ENCODE measurements at regions of chr13 and their contacts with region 1.

Region 1: DNA sequence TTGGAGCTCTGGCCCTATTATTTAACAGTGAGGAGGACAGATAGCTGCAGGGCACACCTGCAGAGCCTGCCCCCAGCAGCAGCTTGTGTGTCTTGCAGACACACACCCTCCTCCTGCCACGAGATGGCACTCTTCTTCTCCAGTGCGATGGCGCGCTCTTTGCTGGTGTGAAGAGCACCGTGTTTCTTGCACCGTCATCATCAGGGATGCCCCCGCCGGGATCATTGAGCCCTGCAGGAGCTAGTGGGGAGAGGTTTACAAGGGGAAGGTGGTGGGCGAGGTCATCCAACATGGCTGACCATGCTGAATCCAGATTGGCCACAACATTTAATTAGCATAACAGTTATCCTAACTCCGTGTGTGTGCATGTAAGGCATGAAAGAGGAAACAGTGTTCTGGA is 105.6 kb downstream of the RAB20 start:
- DNase-seq: peak; percentile 89
- H3K4me3 Mint-ChIP-seq: peak overlapping the region; percentile 64
- H3K27ac Mint-ChIP-seq: peak overlapping the region; percentile 2
- H3K4me1 Mint-ChIP-seq: peaks cover 4% of the 10 kb centered on the region
- H3K27me3 Mint-ChIP-seq: peaks cover 22% of the 10 kb centered on the region

Region 2: GRCh38 chr13:110225609-110226562 is 230.1 kb before region 1 on chr13:
- intact Hi-C with region 1: loop called (anchors 2 kb)
- DNase-seq: no peak
- H3K4me3 Mint-ChIP-seq: no peak overlapping the region
- H3K27ac Mint-ChIP-seq: no peak overlapping the region
- H3K4me1 Mint-ChIP-seq: no peaks in the 10 kb centered on the region
- H3K27me3 Mint-ChIP-seq: peaks cover 15% of the 10 kb centered on the region

Region 3: DNA sequence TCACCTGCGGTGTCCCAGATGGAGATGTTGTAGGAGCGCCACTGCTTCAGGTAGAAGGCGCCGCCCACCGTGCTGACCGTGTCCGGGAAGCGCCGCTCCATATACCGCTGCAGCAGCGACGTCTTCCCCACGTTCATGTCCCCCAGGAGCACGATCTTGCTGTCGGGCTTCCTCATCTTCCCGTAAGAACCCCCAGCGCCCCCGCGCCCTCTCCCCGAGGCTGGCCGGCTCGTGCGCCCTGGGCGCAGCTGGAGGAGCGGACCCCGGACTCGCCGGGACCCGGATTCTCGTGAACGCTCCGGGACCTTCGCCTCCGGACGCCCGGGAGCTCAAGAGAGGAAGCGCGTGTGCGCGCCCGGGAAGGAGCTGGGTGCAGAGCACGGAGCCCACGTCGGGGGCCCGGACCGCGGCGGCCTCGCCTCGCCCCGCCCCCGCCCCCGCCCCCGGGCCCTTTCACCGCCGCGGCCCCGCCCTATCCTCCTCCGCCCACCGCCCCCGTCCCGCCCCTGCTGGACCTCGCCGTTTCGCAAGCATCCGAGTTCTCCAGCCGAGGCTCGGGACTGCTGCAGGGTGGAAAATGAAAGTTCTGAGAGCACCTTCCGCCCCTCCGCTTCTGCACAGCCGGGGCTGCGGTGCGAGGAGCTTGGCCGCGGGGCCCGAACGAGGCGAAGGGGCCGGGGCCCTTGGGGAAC is 105.5 kb after region 1 on chr13 and contains the start of gene RAB20:
- intact Hi-C with region 1: loop called (anchors 5 kb)
- DNase-seq: peak; percentile 91
- H3K4me3 Mint-ChIP-seq: peak within 1 kb of the TSS; percentile 87
- H3K27ac Mint-ChIP-seq: peak within 1 kb of the TSS; percentile 82
- H3K4me1 Mint-ChIP-seq: peaks cover 26% of the 10 kb centered on the region
- H3K27me3 Mint-ChIP-seq: peaks cover 38% of the 10 kb centered on the region
- total RNA-seq, gene RAB20: 2.8 and 3.2 TPM in 2 replicates

Region 4: GRCh38 chr13:110652231-110652730 is 196.3 kb after region 1 on chr13:
- intact Hi-C with region 1: no loop called
- DNase-seq: no peak
- H3K4me3 Mint-ChIP-seq: no peak overlapping the region
- H3K27ac Mint-ChIP-seq: no peak overlapping the region
- H3K4me1 Mint-ChIP-seq: peaks cover 6% of the 10 kb centered on the region
- H3K27me3 Mint-ChIP-seq: no peaks in the 10 kb centered on the region